ENCODE measurements at regions of chr17 and their contacts with region 1.

Region 1: GRCh38 chr17:81871387-81872230 is 472 bp upstream of the ARHGDIA start:
- DNase-seq: peak; percentile 96 to 98
- ATAC-seq: peak; percentile 32 to 78 (median 48)
- H3K4me3 ChIP-seq: peak overlapping the region; percentile 74
- H3K27ac ChIP-seq: peak overlapping the region; percentile 99
- H3K4me1 ChIP-seq: peaks cover 33% of the 10 kb centered on the region
- H3K27me3 ChIP-seq: no peaks in the 10 kb centered on the region
- CTCF ChIP-seq: peak; percentile 18

Region 2: GRCh38 chr17:81821603-81822311 is 49.9 kb before region 1 on chr17:
- intact Hi-C with region 1: no loop called
- DNase-seq: peak; percentile 86 to 95
- ATAC-seq: peak; percentile 75 to 86 (median 82)
- H3K4me3 ChIP-seq: peak overlapping the region; percentile 18
- H3K27ac ChIP-seq: peak overlapping the region; percentile 89
- H3K4me1 ChIP-seq: peaks cover 20% of the 10 kb centered on the region
- H3K27me3 ChIP-seq: peaks cover 0 to 1% (median 0%) of the 10 kb centered on the region in 3 donors
- CTCF ChIP-seq: peak; percentile 70

Region 3: GRCh38 chr17:81831957-81832607 is 39.5 kb before region 1 on chr17:
- intact Hi-C with region 1: no loop called
- DNase-seq: peak in 1 of 2 donors; percentile 78
- ATAC-seq: peak; percentile 5 to 28 (median 20)
- H3K4me3 ChIP-seq: peak overlapping the region; percentile 85
- H3K27ac ChIP-seq: peak overlapping the region; percentile 96
- H3K4me1 ChIP-seq: peaks cover 15% of the 10 kb centered on the region
- H3K27me3 ChIP-seq: no peaks in the 10 kb centered on the region
- CTCF ChIP-seq: no peak

Region 4: GRCh38 chr17:81923302-81924260 is 52.0 kb after region 1 on chr17:
- intact Hi-C with region 1: loop called in 1 of 2 experiments (anchors 5 kb)
- DNase-seq: peak; percentile 80 to 89
- ATAC-seq: peak; percentile 64 to 77 (median 69)
- H3K4me3 ChIP-seq: peak overlapping the region; percentile 76
- H3K27ac ChIP-seq: peak overlapping the region; percentile 81
- H3K4me1 ChIP-seq: peaks cover 69% of the 10 kb centered on the region
- H3K27me3 ChIP-seq: no peaks in the 10 kb centered on the region
- CTCF ChIP-seq: no peak

Region 5: GRCh38 chr17:81939881-81940385 is 68.3 kb after region 1 on chr17:
- intact Hi-C with region 1: loop called in 1 of 2 experiments (anchors 5 kb)
- DNase-seq: peak; percentile 78
- ATAC-seq: peak; percentile 8 to 36 (median 20)
- H3K4me3 ChIP-seq: peak overlapping the region; percentile 72
- H3K27ac ChIP-seq: peak overlapping the region; percentile 99
- H3K4me1 ChIP-seq: peaks cover 27% of the 10 kb centered on the region
- H3K27me3 ChIP-seq: no peaks in the 10 kb centered on the region
- CTCF ChIP-seq: no peak

Region 6: DNA sequence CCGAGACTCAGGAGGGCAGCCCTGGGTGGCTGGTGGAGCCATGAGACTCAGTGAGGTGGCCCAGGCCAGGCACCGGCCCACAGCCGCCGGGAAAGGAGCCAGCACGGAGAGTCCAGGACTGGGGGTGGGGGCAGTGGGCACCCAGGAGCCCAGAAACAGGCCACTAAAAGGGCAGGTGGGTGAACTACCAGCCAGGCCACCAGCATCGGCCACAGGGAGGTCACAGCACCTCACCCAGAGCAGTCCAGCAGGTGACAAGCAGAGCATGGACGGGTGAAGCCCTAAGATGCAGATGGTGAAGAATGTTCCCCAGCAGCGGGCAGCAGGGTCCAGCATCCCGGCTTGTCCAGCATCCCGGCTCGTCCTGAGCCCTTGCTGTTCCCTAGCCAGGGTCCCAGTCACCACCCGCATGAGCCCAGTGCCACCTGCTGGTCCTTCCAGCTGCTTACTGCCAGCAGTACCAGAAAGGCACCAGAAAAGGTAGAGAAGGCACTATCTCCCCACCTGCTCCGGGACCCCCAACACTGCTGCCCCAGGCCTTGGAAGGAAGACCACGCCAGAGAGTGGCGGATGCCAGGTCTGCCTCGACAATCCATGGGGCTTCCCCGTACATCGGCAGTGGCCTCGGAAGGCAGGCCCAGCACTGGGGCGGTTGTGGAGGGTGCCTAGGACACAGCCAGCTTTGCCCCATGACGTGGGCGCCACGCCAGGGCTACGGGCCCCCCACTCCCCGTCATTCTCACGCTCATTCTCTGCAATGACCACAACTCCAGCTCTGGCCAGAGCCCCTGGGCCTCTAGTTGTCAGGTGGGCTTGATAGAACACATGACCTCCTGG is 149.5 kb after region 1 on chr17:
- intact Hi-C with region 1: loop called in 1 of 2 experiments (anchors 2 kb)
- DNase-seq: peak; percentile 74 to 90
- ATAC-seq: peak; percentile 23 to 55 (median 38)
- H3K4me3 ChIP-seq: peak overlapping the region; percentile 91
- H3K27ac ChIP-seq: no peak overlapping the region
- H3K4me1 ChIP-seq: peaks cover 48% of the 10 kb centered on the region
- H3K27me3 ChIP-seq: no peaks in the 10 kb centered on the region
- CTCF ChIP-seq: peak; percentile 77